ENCODE measurements at regions of chr9 and their contacts with region 1.

Region 1: GRCh38 chr9:125558453-125559092 is 148.4 kb downstream of the MAPKAP1 start:
- DNase-seq: peak; percentile 87
- H3K27ac ChIP-seq: no peak overlapping the region
- CTCF ChIP-seq: peak; percentile 94

Region 2: DNA sequence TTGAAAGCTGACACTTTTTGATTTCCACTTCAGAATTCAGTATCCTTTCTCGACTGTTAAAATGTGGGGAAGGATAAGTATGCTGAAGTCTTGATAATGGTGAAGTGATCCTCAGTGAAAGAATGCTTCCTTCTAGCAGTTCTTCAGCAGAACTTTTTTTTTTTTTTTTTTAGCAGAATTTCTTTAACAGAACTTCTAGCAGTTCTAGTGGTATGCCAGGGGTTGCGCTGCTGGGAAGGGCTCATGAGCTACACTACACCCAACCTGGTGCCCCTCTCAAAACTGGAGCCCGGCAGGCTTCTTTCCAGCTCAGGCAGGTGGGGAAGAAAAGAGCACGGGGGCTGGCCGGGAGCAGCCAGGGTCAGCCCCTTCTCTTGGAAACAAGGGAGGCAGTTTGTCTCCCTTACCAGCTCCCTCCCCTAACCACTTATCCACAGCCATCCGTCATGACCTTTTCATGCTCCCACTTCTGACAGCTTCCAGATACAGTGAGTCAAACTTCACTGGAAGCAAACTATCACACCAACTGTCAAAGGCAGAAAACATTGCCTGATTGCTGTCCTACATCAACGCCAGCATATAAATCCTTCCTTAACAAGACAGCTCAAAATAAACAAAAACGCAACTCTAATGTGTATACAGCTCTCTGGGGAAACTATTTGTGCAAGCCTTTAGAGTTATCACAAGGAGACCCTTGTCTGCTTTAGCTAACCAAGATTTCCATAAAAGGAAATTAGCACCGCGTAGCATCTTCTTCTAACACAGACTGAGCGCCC is 85.5 kb before region 1 on chr9:
- CTCF ChIA-PET with region 1: no interaction called
- POLR2A ChIA-PET with region 1: no interaction called
- DNase-seq: no peak
- H3K27ac ChIP-seq: no peak overlapping the region
- CTCF ChIP-seq: no peak

Region 3: DNA sequence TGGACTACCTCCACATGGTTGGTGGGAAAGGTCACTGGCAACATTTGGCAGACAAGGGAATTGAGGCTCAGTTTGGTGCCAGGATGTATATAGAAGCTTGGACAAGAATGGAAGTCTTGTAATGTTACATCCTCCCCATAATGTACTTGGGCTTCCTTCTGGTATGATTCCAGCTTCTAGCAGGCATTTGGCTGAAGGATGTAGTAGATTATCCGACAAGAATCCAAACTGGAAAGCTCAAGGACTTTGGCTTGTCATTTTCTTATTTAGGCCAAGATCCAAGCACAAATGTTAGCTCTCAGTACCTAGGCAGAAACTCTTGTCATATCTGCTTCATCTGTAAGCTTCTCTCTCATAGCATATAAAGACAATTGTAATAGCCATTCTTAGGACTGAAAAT is 60.7 kb before region 1 on chr9:
- CTCF ChIA-PET with region 1: no interaction called
- POLR2A ChIA-PET with region 1: no interaction called
- DNase-seq: no peak
- H3K27ac ChIP-seq: no peak overlapping the region
- CTCF ChIP-seq: no peak

Region 4: GRCh38 chr9:125544988-125545651 is 13.5 kb before region 1 on chr9:
- CTCF ChIA-PET with region 1: interaction called, 10 read pairs
- POLR2A ChIA-PET with region 1: no interaction called
- DNase-seq: no peak
- H3K27ac ChIP-seq: no peak overlapping the region
- CTCF ChIP-seq: no peak

Region 5: GRCh38 chr9:125601961-125602360 is 43.4 kb after region 1 on chr9:
- CTCF ChIA-PET with region 1: no interaction called
- POLR2A ChIA-PET with region 1: no interaction called
- DNase-seq: no peak
- H3K27ac ChIP-seq: no peak overlapping the region
- CTCF ChIP-seq: no peak

Region 6: GRCh38 chr9:126860077-126860756 is 1301.6 kb after region 1 on chr9 and contains the start of gene ZBTB34:
- CTCF ChIA-PET with region 1: no interaction called
- POLR2A ChIA-PET with region 1: no interaction called
- DNase-seq: peak; percentile 73
- H3K27ac ChIP-seq: peak within 1 kb of the TSS; percentile 79
- CTCF ChIP-seq: peak; percentile 100